Activated B cell treated with CpG ODN at 0.5 μM for 24 hours (primary cell): ENCODE measurements at regions of chr6 and their contacts with region 1.

Region 1: GRCh38 chr6:138765896-138766655 is 7.5 kb upstream of the CCDC28A start:
- DNase-seq: no peak
- ATAC-seq: no peak
- H3K4me3 Mint-ChIP-seq: no peak overlapping the region
- H3K27ac Mint-ChIP-seq: no peak overlapping the region
- H3K4me1 Mint-ChIP-seq: peaks cover 10% of the 10 kb centered on the region
- H3K27me3 Mint-ChIP-seq: no peaks in the 10 kb centered on the region
- CTCF ChIP-seq: peak; percentile 64

Region 2: DNA sequence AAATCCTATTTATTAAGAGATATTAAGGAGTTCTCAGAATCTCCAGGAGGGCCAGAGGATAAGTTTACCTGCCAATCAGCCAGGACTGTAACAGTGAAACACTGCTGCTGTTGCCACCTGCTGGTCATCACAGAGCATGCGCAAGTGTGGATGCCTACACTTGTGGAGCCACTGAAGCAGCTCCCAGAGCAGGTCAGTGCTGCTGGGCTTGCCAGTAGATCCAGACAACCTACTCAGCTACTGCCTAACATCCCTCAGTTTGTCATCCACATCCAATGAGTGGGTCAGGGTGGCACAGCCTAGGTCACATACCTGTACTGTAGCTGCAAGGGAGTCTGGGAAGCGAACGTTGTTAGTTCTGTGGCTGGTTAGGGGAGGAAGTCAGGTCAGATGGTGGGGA is 248.4 kb before region 1 on chr6:
- CTCF ChIA-PET with region 1: no interaction called
- POLR2A ChIA-PET with region 1: no interaction called
- intact Hi-C with region 1: loop called (anchors 5 kb)
- DNase-seq: peak; percentile 24
- ATAC-seq: peak; percentile 84
- H3K4me3 Mint-ChIP-seq: no peak overlapping the region
- H3K27ac Mint-ChIP-seq: no peak overlapping the region
- H3K4me1 Mint-ChIP-seq: no peaks in the 10 kb centered on the region
- H3K27me3 Mint-ChIP-seq: peaks cover 20% of the 10 kb centered on the region
- CTCF ChIP-seq: peak; percentile 58

Region 3: DNA sequence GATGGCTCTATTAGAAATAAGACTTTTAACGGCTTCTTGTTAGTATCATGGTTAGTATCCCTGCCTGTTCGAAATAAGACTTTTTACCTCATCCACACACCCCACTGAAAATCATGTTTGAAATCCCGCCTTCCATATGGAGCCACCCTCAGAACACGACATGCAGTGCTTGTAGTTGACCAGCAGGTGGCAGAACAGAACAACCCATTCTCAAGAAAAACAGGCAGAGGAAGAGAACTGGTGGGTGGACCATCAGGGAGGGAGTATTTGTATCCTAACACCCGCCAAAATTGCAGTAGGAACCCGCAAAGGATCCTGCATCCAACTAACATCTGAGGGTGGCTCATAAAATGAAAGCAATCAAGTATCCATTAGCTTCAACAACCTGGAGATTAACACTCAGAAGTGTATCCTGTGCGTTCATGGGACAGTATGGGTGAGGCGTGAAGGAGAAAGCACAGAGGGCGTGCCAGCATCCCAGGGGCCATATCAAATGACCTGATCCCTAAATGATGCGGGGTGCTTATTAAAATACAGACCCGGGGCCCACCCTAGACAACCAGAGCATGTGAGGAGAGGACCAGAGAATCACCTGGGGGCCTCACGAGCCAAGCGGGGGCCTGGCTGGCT is 177.2 kb before region 1 on chr6:
- CTCF ChIA-PET with region 1: interaction called, 85 read pairs
- POLR2A ChIA-PET with region 1: no interaction called
- intact Hi-C with region 1: loop called (anchors 1 kb)
- DNase-seq: no peak
- ATAC-seq: peak; percentile 48
- H3K4me3 Mint-ChIP-seq: no peak overlapping the region
- H3K27ac Mint-ChIP-seq: no peak overlapping the region
- H3K4me1 Mint-ChIP-seq: peaks cover 27% of the 10 kb centered on the region
- H3K27me3 Mint-ChIP-seq: no peaks in the 10 kb centered on the region
- CTCF ChIP-seq: peak; percentile 71

Region 4: GRCh38 chr6:138692058-138692977 is 73.8 kb before region 1 on chr6:
- CTCF ChIA-PET with region 1: interaction called, 15 read pairs
- POLR2A ChIA-PET with region 1: interaction called, 4 read pairs
- intact Hi-C with region 1: loop called (anchors 1 kb)
- DNase-seq: peak; percentile 75
- ATAC-seq: peak; percentile 79
- H3K4me3 Mint-ChIP-seq: peak overlapping the region; percentile 87
- H3K27ac Mint-ChIP-seq: no peak overlapping the region
- H3K4me1 Mint-ChIP-seq: peaks cover 11% of the 10 kb centered on the region
- H3K27me3 Mint-ChIP-seq: peaks cover 31% of the 10 kb centered on the region
- CTCF ChIP-seq: peak; percentile 63

Region 5: GRCh38 chr6:138722425-138723371 is 43.4 kb before region 1 on chr6:
- CTCF ChIA-PET with region 1: no interaction called
- POLR2A ChIA-PET with region 1: no interaction called
- intact Hi-C with region 1: no loop called
- DNase-seq: no peak
- ATAC-seq: no peak
- H3K4me3 Mint-ChIP-seq: no peak overlapping the region
- H3K27ac Mint-ChIP-seq: no peak overlapping the region
- H3K4me1 Mint-ChIP-seq: peaks cover 12% of the 10 kb centered on the region
- H3K27me3 Mint-ChIP-seq: no peaks in the 10 kb centered on the region
- CTCF ChIP-seq: no peak

Region 6: GRCh38 chr6:138817822-138818308 is 51.8 kb after region 1 on chr6:
- CTCF ChIA-PET with region 1: no interaction called
- POLR2A ChIA-PET with region 1: no interaction called
- intact Hi-C with region 1: no loop called
- DNase-seq: no peak
- ATAC-seq: no peak
- H3K4me3 Mint-ChIP-seq: no peak overlapping the region
- H3K27ac Mint-ChIP-seq: peak overlapping the region; percentile 70
- H3K4me1 Mint-ChIP-seq: peaks cover 32% of the 10 kb centered on the region
- H3K27me3 Mint-ChIP-seq: no peaks in the 10 kb centered on the region
- CTCF ChIP-seq: no peak